ENCODE measurements at regions of chr10 and their contacts with region 1.

Region 1: GRCh38 chr10:118241229-118242137 is 100.6 kb downstream of the FAM204A start:
- DNase-seq: peak; percentile 43
- H3K4me3 Mint-ChIP-seq: no peak overlapping the region
- H3K27ac Mint-ChIP-seq: no peak overlapping the region
- H3K4me1 Mint-ChIP-seq: no peaks in the 10 kb centered on the region
- H3K27me3 Mint-ChIP-seq: peaks cover 16% of the 10 kb centered on the region

Region 2: GRCh38 chr10:117167789-117168674 is 1073.5 kb before region 1 on chr10:
- intact Hi-C with region 1: loop called (anchors 10 kb)
- DNase-seq: peak; percentile 39
- H3K4me3 Mint-ChIP-seq: no peak overlapping the region
- H3K27ac Mint-ChIP-seq: no peak overlapping the region
- H3K4me1 Mint-ChIP-seq: peaks cover 7% of the 10 kb centered on the region
- H3K27me3 Mint-ChIP-seq: peaks cover 73% of the 10 kb centered on the region

Region 3: GRCh38 chr10:117496616-117497028 is 744.9 kb before region 1 on chr10:
- intact Hi-C with region 1: loop called (anchors 1 kb)
- DNase-seq: peak; percentile 43
- H3K4me3 Mint-ChIP-seq: no peak overlapping the region
- H3K27ac Mint-ChIP-seq: no peak overlapping the region
- H3K4me1 Mint-ChIP-seq: peaks cover 7% of the 10 kb centered on the region
- H3K27me3 Mint-ChIP-seq: peaks cover 14% of the 10 kb centered on the region

Region 4: GRCh38 chr10:117537436-117537903 is 704.0 kb before region 1 on chr10:
- intact Hi-C with region 1: loop called (anchors 1 kb)
- DNase-seq: no peak
- H3K4me3 Mint-ChIP-seq: no peak overlapping the region
- H3K27ac Mint-ChIP-seq: no peak overlapping the region
- H3K4me1 Mint-ChIP-seq: no peaks in the 10 kb centered on the region
- H3K27me3 Mint-ChIP-seq: peaks cover 76% of the 10 kb centered on the region

Region 5: DNA sequence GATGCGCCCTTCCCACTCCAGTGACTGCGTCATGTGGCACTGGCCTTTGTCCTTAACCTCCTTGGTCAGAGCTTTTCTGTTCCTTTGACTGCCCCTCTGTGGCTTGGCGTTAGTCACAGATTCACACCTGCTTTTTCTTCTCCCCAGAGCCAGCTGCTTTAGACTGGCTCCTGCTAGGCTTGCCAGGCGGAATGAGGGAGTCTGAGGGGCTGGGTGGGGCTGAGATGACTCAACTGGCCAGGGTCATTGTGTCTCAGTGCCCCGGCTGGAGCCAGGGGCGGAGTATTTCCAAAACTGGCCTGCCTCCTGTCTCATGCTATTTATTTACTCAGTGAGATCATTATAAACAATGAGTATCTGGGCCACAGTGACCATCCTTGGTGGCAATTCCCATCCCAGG is 504.8 kb before region 1 on chr10:
- intact Hi-C with region 1: loop called (anchors 2 kb)
- DNase-seq: no peak
- H3K4me3 Mint-ChIP-seq: no peak overlapping the region
- H3K27ac Mint-ChIP-seq: no peak overlapping the region
- H3K4me1 Mint-ChIP-seq: no peaks in the 10 kb centered on the region
- H3K27me3 Mint-ChIP-seq: peaks cover 35% of the 10 kb centered on the region

Region 6: GRCh38 chr10:117860823-117861222 is 380.7 kb before region 1 on chr10:
- intact Hi-C with region 1: loop called (anchors 2 kb)
- DNase-seq: no peak
- H3K4me3 Mint-ChIP-seq: no peak overlapping the region
- H3K27ac Mint-ChIP-seq: no peak overlapping the region
- H3K4me1 Mint-ChIP-seq: no peaks in the 10 kb centered on the region
- H3K27me3 Mint-ChIP-seq: peaks cover 10% of the 10 kb centered on the region